GM18951 (cell line): ENCODE measurements at regions of chr16 and their contacts with region 1.

Region 1: GRCh38 chr16:68517606-68518166 is 21.4 kb upstream of the ZFP90 start:
- POLR2A ChIP-seq: no peak

Region 2: GRCh38 chr16:68396481-68396880 is 121.2 kb before region 1 on chr16:
- in situ Hi-C with region 1: loop called (anchors 10 kb)
- POLR2A ChIP-seq: no peak